Activated naive CD4-positive, alpha-beta T cell treated with anti-CD3 and anti-CD28 coated beads for 36 hours (primary cell): ENCODE measurements at regions of chr1 and their contacts with region 1.

Region 1: DNA sequence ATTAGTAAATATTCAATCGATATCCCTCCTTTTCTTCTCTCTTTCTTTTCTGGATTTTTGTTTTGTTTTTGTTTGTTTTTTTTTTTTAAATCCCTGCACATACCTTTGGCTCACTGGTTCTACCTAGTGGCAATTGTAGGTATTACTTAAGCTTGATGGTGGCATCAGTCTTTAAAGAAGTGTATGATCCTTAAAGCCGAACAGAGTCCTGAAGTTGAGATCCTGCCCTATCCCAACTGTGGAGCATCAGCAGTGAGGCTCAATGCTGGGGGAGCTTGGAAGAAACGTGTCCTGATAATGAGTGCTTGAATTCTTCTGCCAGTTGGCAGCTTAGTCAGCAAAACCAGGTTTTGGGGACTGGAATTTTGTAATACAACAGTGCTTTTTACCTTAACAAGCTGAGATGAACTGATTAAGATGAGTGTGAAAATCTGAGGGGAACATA is 60.8 kb downstream of the FASLG start:
- DNase-seq: no peak
- H3K4me3 Mint-ChIP-seq: no peak overlapping the region
- H3K27ac Mint-ChIP-seq: no peak overlapping the region
- H3K4me1 Mint-ChIP-seq: peaks cover 33% of the 10 kb centered on the region
- H3K27me3 Mint-ChIP-seq: peaks cover 3% of the 10 kb centered on the region

Region 2: DNA sequence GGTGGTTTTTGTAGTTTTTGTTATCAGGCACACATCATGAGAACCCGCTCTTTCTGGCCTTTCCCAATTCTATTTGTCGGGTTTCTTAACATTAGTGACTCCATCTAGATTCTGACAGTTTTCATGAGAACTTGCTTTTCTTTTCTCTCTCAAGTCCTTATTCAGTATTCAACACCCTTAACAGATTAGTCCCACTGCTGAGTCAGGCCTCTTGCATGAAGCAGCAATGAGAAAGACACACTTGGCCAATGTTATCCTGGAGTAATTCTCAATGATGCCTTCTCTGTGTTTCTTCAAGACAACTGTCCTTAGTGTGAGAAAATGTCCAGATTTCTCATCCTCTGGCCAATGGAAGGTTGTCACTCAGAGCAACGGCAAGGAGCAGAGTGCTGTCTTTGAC is 1523.4 kb before region 1 on chr1:
- CTCF ChIA-PET with region 1: no interaction called
- intact Hi-C with region 1: no loop called
- DNase-seq: no peak
- H3K4me3 Mint-ChIP-seq: no peak overlapping the region
- H3K27ac Mint-ChIP-seq: no peak overlapping the region
- H3K4me1 Mint-ChIP-seq: no peaks in the 10 kb centered on the region
- H3K27me3 Mint-ChIP-seq: no peaks in the 10 kb centered on the region

Region 3: GRCh38 chr1:172449585-172450534 is 269.9 kb before region 1 on chr1:
- CTCF ChIA-PET with region 1: interaction called, 15 read pairs
- intact Hi-C with region 1: loop called (anchors 1 kb)
- DNase-seq: peak; percentile 53
- H3K4me3 Mint-ChIP-seq: peak overlapping the region; percentile 7
- H3K27ac Mint-ChIP-seq: peak overlapping the region; percentile 26
- H3K4me1 Mint-ChIP-seq: peaks cover 31% of the 10 kb centered on the region
- H3K27me3 Mint-ChIP-seq: no peaks in the 10 kb centered on the region

Region 4: GRCh38 chr1:172616195-172616970 is 103.3 kb before region 1 on chr1:
- CTCF ChIA-PET with region 1: interaction called, 117 read pairs
- intact Hi-C with region 1: no loop called
- DNase-seq: no peak
- H3K4me3 Mint-ChIP-seq: no peak overlapping the region
- H3K27ac Mint-ChIP-seq: no peak overlapping the region
- H3K4me1 Mint-ChIP-seq: peaks cover 7% of the 10 kb centered on the region
- H3K27me3 Mint-ChIP-seq: no peaks in the 10 kb centered on the region

Region 5: DNA sequence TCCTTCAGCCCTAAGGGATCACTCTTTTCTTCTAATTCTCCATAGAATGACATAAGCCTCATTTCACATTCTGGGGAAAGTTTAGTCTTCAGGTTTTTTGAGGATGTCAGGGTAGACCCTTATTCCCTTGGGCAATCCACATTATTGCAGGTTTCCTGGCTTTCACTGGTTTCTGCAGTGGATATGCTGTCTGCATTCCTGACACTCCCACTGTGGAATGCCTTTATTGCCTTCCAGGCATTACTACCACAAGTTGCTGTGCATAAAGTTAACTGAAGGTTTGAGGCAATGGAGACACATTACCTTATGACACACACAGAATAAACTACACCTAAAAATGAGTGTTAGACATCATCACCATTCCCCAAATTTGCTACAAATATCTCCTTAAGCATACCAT is 48.1 kb before region 1 on chr1:
- CTCF ChIA-PET with region 1: interaction called, 8 read pairs
- intact Hi-C with region 1: loop called (anchors 2 kb)
- DNase-seq: no peak
- H3K4me3 Mint-ChIP-seq: no peak overlapping the region
- H3K27ac Mint-ChIP-seq: no peak overlapping the region
- H3K4me1 Mint-ChIP-seq: peaks cover 70% of the 10 kb centered on the region
- H3K27me3 Mint-ChIP-seq: no peaks in the 10 kb centered on the region

Region 6: DNA sequence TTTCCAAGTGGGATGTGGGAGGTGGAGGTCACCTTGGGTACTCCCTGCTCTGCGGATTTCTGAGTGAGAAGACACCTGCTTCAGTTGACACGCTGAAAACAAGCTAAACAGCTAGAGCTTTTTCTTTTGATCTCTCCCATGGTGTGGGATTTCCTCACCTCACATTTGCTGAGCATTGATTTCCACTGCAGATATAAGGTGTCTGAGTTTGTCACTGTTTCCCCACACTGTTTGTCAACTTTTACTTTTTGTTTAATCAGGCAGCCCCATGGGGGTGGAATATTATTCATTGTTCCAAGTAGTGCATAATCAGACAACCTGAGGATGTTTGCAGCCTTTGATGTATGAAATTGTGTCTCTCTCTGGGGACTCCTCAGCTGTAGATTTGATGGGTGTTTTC is 11.3 kb before region 1 on chr1:
- CTCF ChIA-PET with region 1: interaction called, 5 read pairs
- intact Hi-C with region 1: loop called (anchors 1 kb)
- DNase-seq: peak; percentile 55
- H3K4me3 Mint-ChIP-seq: no peak overlapping the region
- H3K27ac Mint-ChIP-seq: no peak overlapping the region
- H3K4me1 Mint-ChIP-seq: peaks cover 24% of the 10 kb centered on the region
- H3K27me3 Mint-ChIP-seq: no peaks in the 10 kb centered on the region